WTC11 (cell line): ENCODE measurements at regions of chr17 and their contacts with region 1.

Region 1: GRCh38 chr17:38868817-38869525 is 887 bp upstream of the LASP1 start:
- DNase-seq: peak; percentile 95
- ATAC-seq: peak; percentile 37
- H3K4me3 Mint-ChIP-seq: peak overlapping the region; percentile 92
- H3K27ac Mint-ChIP-seq: peak overlapping the region; percentile 97
- H3K4me1 Mint-ChIP-seq: peaks cover 32% of the 10 kb centered on the region
- H3K27me3 Mint-ChIP-seq: no peaks in the 10 kb centered on the region
- CTCF ChIP-seq: no peak

Region 2: GRCh38 chr17:38724337-38724988 is 144.5 kb before region 1 on chr17:
- CTCF ChIA-PET with region 1: no interaction called
- POLR2A ChIA-PET with region 1: no interaction called
- DNase-seq: no peak
- ATAC-seq: no peak
- H3K4me3 Mint-ChIP-seq: no peak overlapping the region
- H3K27ac Mint-ChIP-seq: no peak overlapping the region
- H3K4me1 Mint-ChIP-seq: peaks cover 19% of the 10 kb centered on the region
- H3K27me3 Mint-ChIP-seq: peaks cover 34% of the 10 kb centered on the region
- CTCF ChIP-seq: no peak

Region 3: DNA sequence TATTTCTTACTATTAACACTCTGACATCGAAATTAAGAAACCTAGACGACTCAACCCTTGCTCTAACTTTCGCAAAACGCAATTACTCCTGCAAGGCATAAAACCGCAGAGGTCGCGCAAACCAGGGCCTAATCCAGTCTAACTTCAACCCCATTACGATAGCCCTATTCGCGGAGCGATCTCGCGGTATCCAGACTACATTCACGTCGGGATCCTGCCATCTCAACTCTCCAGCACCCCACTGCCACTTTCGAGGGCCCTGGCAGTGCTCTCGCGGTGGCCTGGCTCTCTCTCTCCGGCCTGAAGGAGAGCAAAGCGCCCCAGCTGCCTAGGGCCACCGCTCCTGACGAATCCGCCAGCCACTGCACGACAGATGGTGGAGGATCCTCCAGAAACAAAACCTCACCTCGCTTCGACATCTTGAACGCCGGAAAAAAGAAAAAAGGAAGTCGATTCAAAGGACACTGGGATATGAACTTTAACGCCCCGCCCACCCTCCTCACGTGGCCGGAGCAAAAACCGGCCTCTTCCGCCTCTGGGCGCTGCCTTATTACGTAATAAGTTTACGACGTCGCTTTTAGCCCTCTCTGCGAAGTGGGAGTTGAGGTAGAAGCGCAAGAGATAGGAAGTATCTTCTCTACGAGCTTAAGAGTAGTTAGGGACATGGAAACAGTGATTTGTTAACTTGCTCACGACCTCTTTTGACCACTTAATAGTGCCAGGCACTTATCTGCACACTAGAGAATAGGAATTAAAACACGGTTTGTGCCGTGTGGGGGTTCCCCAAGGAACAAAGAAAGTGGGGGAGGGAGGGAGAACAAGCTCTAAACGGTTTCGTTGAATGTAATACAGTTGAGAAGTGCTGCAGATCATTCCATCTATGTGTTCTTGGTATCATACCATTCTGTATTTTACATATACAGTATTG is 15.4 kb before region 1 on chr17 and contains the start of gene RPL23:
- CTCF ChIA-PET with region 1: interaction called, 5 read pairs
- POLR2A ChIA-PET with region 1: interaction called, 13 read pairs
- DNase-seq: peak; percentile 92
- ATAC-seq: peak; percentile 83
- H3K4me3 Mint-ChIP-seq: peak within 1 kb of the TSS; percentile 99
- H3K27ac Mint-ChIP-seq: peak within 1 kb of the TSS; percentile 100
- H3K4me1 Mint-ChIP-seq: peaks cover 32% of the 10 kb centered on the region
- H3K27me3 Mint-ChIP-seq: no peaks in the 10 kb centered on the region; the same call in 1 of the 2 replicates
- CTCF ChIP-seq: no peak
- total RNA-seq, gene RPL23: 1,832 to 2,028 TPM (median 1,945 TPM) in 3 replicates

Region 4: DNA sequence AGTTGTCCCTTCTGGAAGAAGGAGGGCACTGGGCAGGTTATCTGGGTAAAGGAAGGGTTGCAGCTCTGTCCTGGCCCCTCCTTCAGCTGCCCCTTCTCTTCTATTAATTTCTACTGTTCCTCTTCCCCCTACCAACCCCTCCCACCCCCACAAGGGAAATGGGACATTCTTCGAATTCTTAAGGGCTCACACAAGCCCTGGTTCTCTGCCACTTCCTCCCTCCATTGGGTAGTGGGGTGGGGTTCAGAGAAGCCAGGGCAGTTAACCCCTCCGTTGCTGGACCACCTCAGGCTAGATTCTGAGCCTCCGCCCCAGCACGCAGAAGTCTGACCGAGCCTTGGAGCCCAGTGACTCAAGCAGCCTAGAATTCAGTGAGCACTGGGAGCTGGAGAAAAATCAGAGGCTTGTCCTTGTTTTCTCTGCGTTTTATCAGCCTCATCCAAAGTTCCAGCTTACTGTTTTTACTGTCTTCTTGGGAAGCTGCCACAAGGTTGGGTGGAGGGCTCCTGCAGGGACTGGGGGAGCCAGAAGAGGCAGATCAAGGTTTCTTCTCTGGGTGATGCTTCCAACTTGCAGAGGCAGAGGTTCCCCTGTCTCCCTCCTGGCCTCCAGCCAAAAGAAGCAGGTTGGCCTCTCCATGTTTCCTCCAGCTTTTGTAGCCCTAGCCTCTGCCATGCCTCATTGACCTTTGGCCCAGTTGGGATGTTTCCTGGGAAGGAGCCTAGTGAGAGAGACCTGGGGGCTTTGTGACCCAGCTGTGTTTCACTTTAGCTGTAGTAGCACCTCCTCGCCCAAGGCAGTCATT is 11.1 kb after region 1 on chr17:
- CTCF ChIA-PET with region 1: interaction called, 3 read pairs
- POLR2A ChIA-PET with region 1: interaction called, 16 read pairs
- DNase-seq: peak; percentile 79
- ATAC-seq: peak; percentile 92
- H3K4me3 Mint-ChIP-seq: peak overlapping the region; percentile 63
- H3K27ac Mint-ChIP-seq: peak overlapping the region; percentile 98
- H3K4me1 Mint-ChIP-seq: peaks cover 92% of the 10 kb centered on the region
- H3K27me3 Mint-ChIP-seq: no peaks in the 10 kb centered on the region
- CTCF ChIP-seq: no peak

Region 5: GRCh38 chr17:39069114-39069756 is 200.3 kb after region 1 on chr17:
- CTCF ChIA-PET with region 1: no interaction called
- POLR2A ChIA-PET with region 1: no interaction called
- DNase-seq: no peak
- ATAC-seq: peak; percentile 88
- H3K4me3 Mint-ChIP-seq: no peak overlapping the region
- H3K27ac Mint-ChIP-seq: no peak overlapping the region; the same call in 1 of the 2 replicates
- H3K4me1 Mint-ChIP-seq: peaks cover 12% of the 10 kb centered on the region
- H3K27me3 Mint-ChIP-seq: no peaks in the 10 kb centered on the region
- CTCF ChIP-seq: 0 out of 2 replicates have a peak, but pooled peaks have one; percentile 27